AG04449 (cell line): ENCODE measurements at regions of chr1 and their contacts with region 1.

Region 1: DNA sequence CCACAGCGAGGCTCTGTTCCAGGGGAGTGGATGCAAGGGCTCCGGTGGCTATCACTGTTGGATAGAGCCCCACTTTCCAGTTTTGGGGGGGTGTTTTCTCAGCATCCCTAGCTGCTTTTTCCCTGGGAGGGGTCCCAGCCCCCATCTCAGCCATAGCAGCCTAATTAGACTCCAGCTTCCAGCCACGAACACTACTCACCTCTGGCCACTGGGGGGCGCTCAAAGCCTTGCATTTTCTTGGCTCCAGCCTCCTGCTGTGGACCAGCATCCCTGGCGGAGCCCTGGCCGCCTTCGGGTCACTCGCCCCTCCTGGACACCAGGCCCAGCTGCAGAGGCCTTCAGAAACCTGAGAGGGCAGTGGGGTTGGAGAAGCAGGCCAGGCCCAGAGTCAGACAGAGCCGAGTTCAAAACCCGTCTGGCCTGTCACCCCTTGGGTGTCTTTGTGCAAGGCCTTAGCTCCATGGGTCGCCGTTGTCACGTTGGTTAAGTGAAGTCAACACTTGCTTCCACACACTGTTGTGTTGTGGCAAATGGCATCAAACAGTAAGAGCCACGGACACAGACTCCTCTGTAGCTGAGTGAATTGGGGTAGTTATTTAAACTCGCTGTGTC is 93.5 kb upstream of the ACTL8 start:
- DNase-seq: no peak
- H3K4me3 ChIP-seq: no peak overlapping the region
- CTCF ChIP-seq: peak; percentile 84

Region 2: GRCh38 chr1:17419626-17420328 is 241.9 kb before region 1 on chr1:
- CTCF ChIA-PET with region 1: no interaction called
- POLR2A ChIA-PET with region 1: no interaction called
- DNase-seq: no peak
- H3K4me3 ChIP-seq: no peak overlapping the region
- CTCF ChIP-seq: peak; percentile 98

Region 3: GRCh38 chr1:17515922-17516618 is 145.6 kb before region 1 on chr1:
- CTCF ChIA-PET with region 1: no interaction called
- POLR2A ChIA-PET with region 1: no interaction called
- DNase-seq: no peak
- H3K4me3 ChIP-seq: no peak overlapping the region
- CTCF ChIP-seq: no peak

Region 4: DNA sequence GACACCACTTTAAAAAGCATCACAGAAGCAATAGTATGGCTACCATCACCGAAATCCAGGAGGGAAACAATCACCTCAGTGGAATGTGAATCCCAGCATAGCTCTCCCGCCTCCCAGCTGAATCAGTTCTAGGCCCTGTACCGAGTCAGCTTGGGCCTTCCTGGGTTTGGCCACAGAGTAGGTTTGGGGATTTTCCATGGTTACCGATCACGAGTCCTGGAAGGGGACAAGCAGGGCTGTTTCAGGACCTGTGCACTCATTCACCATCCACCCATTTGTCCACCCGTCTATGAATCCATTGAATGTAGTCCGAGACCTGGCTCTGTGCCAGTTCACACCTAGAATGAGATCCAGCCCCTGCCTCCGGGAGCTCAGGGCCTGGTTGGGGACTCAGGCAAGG is 28.0 kb before region 1 on chr1:
- CTCF ChIA-PET with region 1: interaction called, 12 read pairs
- POLR2A ChIA-PET with region 1: no interaction called
- DNase-seq: peak; percentile 40
- H3K4me3 ChIP-seq: no peak overlapping the region
- CTCF ChIP-seq: no peak

Region 5: GRCh38 chr1:17696417-17697301 is 35.0 kb after region 1 on chr1:
- CTCF ChIA-PET with region 1: interaction called, 51 read pairs
- POLR2A ChIA-PET with region 1: no interaction called
- DNase-seq: peak; percentile 38
- H3K4me3 ChIP-seq: no peak overlapping the region
- CTCF ChIP-seq: peak; percentile 63

Region 6: GRCh38 chr1:17776426-17776825 is 114.8 kb after region 1 on chr1:
- CTCF ChIA-PET with region 1: no interaction called
- POLR2A ChIA-PET with region 1: no interaction called
- DNase-seq: no peak
- H3K4me3 ChIP-seq: no peak overlapping the region
- CTCF ChIP-seq: no peak

Region 7: DNA sequence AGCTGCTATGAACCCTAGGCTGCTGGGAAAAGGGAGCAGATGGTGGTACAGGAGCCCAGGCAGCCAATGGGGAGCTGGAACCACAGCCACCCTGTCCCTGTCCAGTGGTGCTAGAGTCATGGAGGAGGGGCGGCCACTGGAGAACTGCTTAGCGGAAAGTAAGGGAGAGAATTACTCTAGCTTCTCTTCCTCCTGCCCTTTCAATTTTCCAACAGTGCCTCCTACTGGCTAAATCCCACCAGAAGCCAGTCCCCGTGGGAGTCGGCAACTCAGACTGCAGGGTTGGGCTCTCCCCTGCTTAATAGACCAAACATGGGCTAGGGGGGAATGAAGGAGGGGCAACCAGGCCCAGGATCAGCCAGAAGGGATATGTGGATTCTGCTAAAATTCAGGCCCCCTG is 248.0 kb after region 1 on chr1:
- CTCF ChIA-PET with region 1: interaction called, 45 read pairs
- POLR2A ChIA-PET with region 1: no interaction called
- DNase-seq: no peak
- H3K4me3 ChIP-seq: no peak overlapping the region
- CTCF ChIP-seq: peak; percentile 17

Region 8: DNA sequence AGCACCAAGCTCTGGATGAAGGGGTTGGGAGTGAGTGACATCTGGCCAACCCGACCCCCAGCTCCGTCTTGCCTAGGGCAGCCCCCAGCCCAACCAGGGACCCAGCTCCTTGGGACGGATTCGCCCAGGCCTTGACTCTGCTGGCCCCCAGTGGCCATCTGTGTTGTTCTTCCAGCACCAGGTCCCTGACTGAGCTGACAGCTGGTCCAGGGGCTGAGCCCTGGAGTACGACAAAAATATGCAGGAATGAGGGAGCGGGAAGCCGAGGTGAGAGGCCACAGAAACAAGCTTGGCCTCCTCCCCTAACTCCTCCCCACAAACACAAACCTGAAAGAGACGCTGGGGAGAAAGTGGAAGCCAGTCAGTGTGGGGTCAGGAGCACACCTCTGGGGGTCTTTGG is 914.0 kb after region 1 on chr1:
- CTCF ChIA-PET with region 1: interaction called, 13 read pairs
- POLR2A ChIA-PET with region 1: no interaction called
- DNase-seq: no peak
- H3K4me3 ChIP-seq: no peak overlapping the region
- CTCF ChIP-seq: peak; percentile 76